B cell (primary cell): ENCODE measurements at regions of chr2 and their contacts with region 1.

Region 1: GRCh38 chr2:42086500-42086953 is 38.7 kb downstream of the PKDCC start:
- DNase-seq: peak; percentile 75
- ATAC-seq: peak; percentile 65
- H3K4me3 ChIP-seq: no peak overlapping the region
- H3K4me3 Mint-ChIP-seq: no peak overlapping the region
- H3K27ac ChIP-seq: no peak overlapping the region
- H3K27ac Mint-ChIP-seq: no peak overlapping the region
- H3K4me1 ChIP-seq: peaks cover 3 to 4% of the 10 kb centered on the region in 2 donors
- H3K4me1 Mint-ChIP-seq: peaks cover 4% of the 10 kb centered on the region
- H3K27me3 ChIP-seq: peaks cover 0 to 17% (median 2%) of the 10 kb centered on the region in 4 experiments
- H3K27me3 Mint-ChIP-seq: peaks cover 8% of the 10 kb centered on the region
- CTCF ChIP-seq: peak; percentile 77

Region 2: DNA sequence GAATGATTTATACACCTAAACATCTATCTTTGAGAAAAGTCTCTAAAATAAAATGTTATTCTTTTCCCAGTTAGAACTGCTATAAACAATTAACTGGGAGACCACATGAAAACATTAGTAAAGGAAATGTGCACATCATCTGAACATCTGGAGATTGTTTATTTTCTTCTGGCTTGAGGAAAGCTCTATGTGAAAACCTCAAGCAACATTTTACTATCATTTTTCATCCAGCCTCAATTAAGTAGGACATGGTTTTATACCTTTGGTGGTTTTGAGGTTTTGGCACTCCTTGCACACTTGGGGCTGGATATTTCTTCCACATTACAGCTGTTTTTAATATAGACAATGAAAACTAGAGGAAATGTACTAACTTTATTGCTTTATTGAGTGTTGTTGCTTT is 1025.2 kb before region 1 on chr2:
- CTCF ChIA-PET with region 1: no interaction called
- POLR2A ChIA-PET with region 1: no interaction called
- intact Hi-C with region 1: no loop called
- DNase-seq: no peak
- ATAC-seq: no peak
- H3K4me3 ChIP-seq: no peak overlapping the region
- H3K4me3 Mint-ChIP-seq: no peak overlapping the region
- H3K27ac ChIP-seq: no peak overlapping the region
- H3K27ac Mint-ChIP-seq: no peak overlapping the region
- H3K4me1 ChIP-seq: no peaks in the 10 kb centered on the region
- H3K4me1 Mint-ChIP-seq: no peaks in the 10 kb centered on the region
- H3K27me3 ChIP-seq: no peaks in the 10 kb centered on the region
- H3K27me3 Mint-ChIP-seq: no peaks in the 10 kb centered on the region
- CTCF ChIP-seq: no peak

Region 3: GRCh38 chr2:41840702-41841551 is 245.6 kb before region 1 on chr2:
- CTCF ChIA-PET with region 1: interaction called, 22 read pairs
- POLR2A ChIA-PET with region 1: no interaction called
- intact Hi-C with region 1: loop called (anchors 1 kb)
- DNase-seq: peak; percentile 97
- ATAC-seq: peak; percentile 99
- H3K4me3 ChIP-seq: peak overlapping the region; percentile 64 to 90 (median 85)
- H3K4me3 Mint-ChIP-seq: peak overlapping the region; percentile 97
- H3K27ac ChIP-seq: peak overlapping the region; percentile 63 to 72
- H3K27ac Mint-ChIP-seq: peak overlapping the region; percentile 88
- H3K4me1 ChIP-seq: peaks cover 10 to 15% of the 10 kb centered on the region in 2 donors
- H3K4me1 Mint-ChIP-seq: peaks cover 11% of the 10 kb centered on the region
- H3K27me3 ChIP-seq: peaks cover 0 to 20% (median 13%) of the 10 kb centered on the region in 4 experiments
- H3K27me3 Mint-ChIP-seq: peaks cover 42% of the 10 kb centered on the region
- CTCF ChIP-seq: peak; percentile 94

Region 4: GRCh38 chr2:41853427-41854216 is 232.9 kb before region 1 on chr2:
- CTCF ChIA-PET with region 1: interaction called, 78 read pairs
- POLR2A ChIA-PET with region 1: no interaction called
- intact Hi-C with region 1: no loop called
- DNase-seq: peak; percentile 35
- ATAC-seq: no peak
- H3K4me3 ChIP-seq: no peak overlapping the region
- H3K4me3 Mint-ChIP-seq: no peak overlapping the region
- H3K27ac ChIP-seq: no peak overlapping the region
- H3K27ac Mint-ChIP-seq: no peak overlapping the region
- H3K4me1 ChIP-seq: peaks cover 4 to 6% of the 10 kb centered on the region in 2 donors
- H3K4me1 Mint-ChIP-seq: peaks cover 2% of the 10 kb centered on the region
- H3K27me3 ChIP-seq: peaks cover 0 to 33% (median 5%) of the 10 kb centered on the region in 4 experiments
- H3K27me3 Mint-ChIP-seq: peaks cover 29% of the 10 kb centered on the region
- CTCF ChIP-seq: peak; percentile 44

Region 5: GRCh38 chr2:41869542-41870264 is 216.8 kb before region 1 on chr2:
- CTCF ChIA-PET with region 1: interaction called, 352 read pairs
- POLR2A ChIA-PET with region 1: no interaction called
- intact Hi-C with region 1: no loop called
- DNase-seq: peak; percentile 77
- ATAC-seq: peak; percentile 64
- H3K4me3 ChIP-seq: no peak overlapping the region
- H3K4me3 Mint-ChIP-seq: no peak overlapping the region
- H3K27ac ChIP-seq: no peak overlapping the region
- H3K27ac Mint-ChIP-seq: no peak overlapping the region
- H3K4me1 ChIP-seq: no peaks in the 10 kb centered on the region
- H3K4me1 Mint-ChIP-seq: no peaks in the 10 kb centered on the region
- H3K27me3 ChIP-seq: peaks cover 0 to 9% (median 0%) of the 10 kb centered on the region in 4 experiments
- H3K27me3 Mint-ChIP-seq: peaks cover 12% of the 10 kb centered on the region
- CTCF ChIP-seq: peak; percentile 90

Region 6: GRCh38 chr2:41981417-41981816 is 105.1 kb before region 1 on chr2:
- CTCF ChIA-PET with region 1: no interaction called
- POLR2A ChIA-PET with region 1: no interaction called
- intact Hi-C with region 1: no loop called
- DNase-seq: no peak
- ATAC-seq: no peak
- H3K4me3 ChIP-seq: no peak overlapping the region
- H3K4me3 Mint-ChIP-seq: no peak overlapping the region
- H3K27ac ChIP-seq: no peak overlapping the region
- H3K27ac Mint-ChIP-seq: no peak overlapping the region
- H3K4me1 ChIP-seq: no peaks in the 10 kb centered on the region
- H3K4me1 Mint-ChIP-seq: no peaks in the 10 kb centered on the region
- H3K27me3 ChIP-seq: no peaks in the 10 kb centered on the region
- H3K27me3 Mint-ChIP-seq: peaks cover 26% of the 10 kb centered on the region
- CTCF ChIP-seq: no peak

Region 7: GRCh38 chr2:42057159-42057901 is 29.2 kb before region 1 on chr2:
- CTCF ChIA-PET with region 1: no interaction called
- POLR2A ChIA-PET with region 1: no interaction called
- intact Hi-C with region 1: no loop called
- DNase-seq: no peak
- ATAC-seq: no peak
- H3K4me3 ChIP-seq: no peak overlapping the region
- H3K4me3 Mint-ChIP-seq: no peak overlapping the region
- H3K27ac ChIP-seq: no peak overlapping the region
- H3K27ac Mint-ChIP-seq: no peak overlapping the region
- H3K4me1 ChIP-seq: no peaks in the 10 kb centered on the region
- H3K4me1 Mint-ChIP-seq: no peaks in the 10 kb centered on the region
- H3K27me3 ChIP-seq: peaks cover 0 to 3% (median 0%) of the 10 kb centered on the region in 4 experiments
- H3K27me3 Mint-ChIP-seq: peaks cover 14% of the 10 kb centered on the region
- CTCF ChIP-seq: no peak

Region 8: GRCh38 chr2:42238644-42239288 is 152.2 kb after region 1 on chr2:
- CTCF ChIA-PET with region 1: interaction called, 19 read pairs
- POLR2A ChIA-PET with region 1: no interaction called
- intact Hi-C with region 1: no loop called
- DNase-seq: peak; percentile 58
- ATAC-seq: peak; percentile 84
- H3K4me3 ChIP-seq: no peak overlapping the region
- H3K4me3 Mint-ChIP-seq: no peak overlapping the region
- H3K27ac ChIP-seq: no peak overlapping the region
- H3K27ac Mint-ChIP-seq: no peak overlapping the region
- H3K4me1 ChIP-seq: peaks cover 26 to 27% of the 10 kb centered on the region in 2 donors
- H3K4me1 Mint-ChIP-seq: peaks cover 73% of the 10 kb centered on the region
- H3K27me3 ChIP-seq: no peaks in the 10 kb centered on the region
- H3K27me3 Mint-ChIP-seq: no peaks in the 10 kb centered on the region
- CTCF ChIP-seq: peak; percentile 23

Region 9: DNA sequence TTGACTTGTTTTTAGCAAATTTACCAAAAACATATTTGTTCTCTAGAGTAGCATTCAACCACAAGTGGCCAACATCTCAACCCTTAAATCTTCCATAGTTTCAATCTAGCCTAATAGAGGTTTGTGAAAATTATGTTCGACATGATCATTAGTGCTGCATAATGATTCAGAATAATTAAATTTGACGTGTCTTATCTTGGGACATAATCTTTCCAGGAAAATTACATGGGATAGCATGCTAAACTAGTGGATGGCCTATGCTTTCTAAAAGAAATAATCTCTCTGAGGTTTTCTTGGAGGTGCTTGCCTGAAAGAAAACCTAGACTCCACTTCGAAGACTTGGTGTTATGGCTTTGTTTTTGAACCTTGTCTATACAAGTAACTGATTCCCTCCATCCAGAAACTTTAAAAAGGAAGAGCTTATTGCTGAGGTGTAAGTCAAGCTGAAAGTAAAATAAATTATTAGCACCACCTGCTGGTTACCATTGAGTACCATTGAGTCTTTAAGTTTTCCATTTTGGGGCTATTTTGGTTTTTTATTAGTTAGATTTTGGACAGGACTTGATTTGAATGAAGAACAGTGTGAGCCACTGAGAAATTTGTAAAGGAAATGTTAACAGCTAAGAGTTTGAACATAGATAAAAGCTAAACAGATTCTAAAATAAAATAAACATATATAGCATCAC is 241.8 kb after region 1 on chr2:
- CTCF ChIA-PET with region 1: interaction called, 10 read pairs
- POLR2A ChIA-PET with region 1: no interaction called
- intact Hi-C with region 1: loop called (anchors 10 kb)
- DNase-seq: peak; percentile 23
- ATAC-seq: no peak
- H3K4me3 ChIP-seq: no peak overlapping the region
- H3K4me3 Mint-ChIP-seq: no peak overlapping the region
- H3K27ac ChIP-seq: no peak overlapping the region
- H3K27ac Mint-ChIP-seq: no peak overlapping the region
- H3K4me1 ChIP-seq: no peaks in the 10 kb centered on the region
- H3K4me1 Mint-ChIP-seq: no peaks in the 10 kb centered on the region
- H3K27me3 ChIP-seq: no peaks in the 10 kb centered on the region
- H3K27me3 Mint-ChIP-seq: no peaks in the 10 kb centered on the region
- CTCF ChIP-seq: peak; percentile 40